ENCODE measurements at regions of chr5 and their contacts with region 1.

Region 1: GRCh38 chr5:60232036-60232795 is 338.7 kb upstream of the PDE4D start:
- DNase-seq: no peak
- H3K4me3 ChIP-seq: no peak overlapping the region
- H3K27ac ChIP-seq: no peak overlapping the region
- H3K4me1 ChIP-seq: no peaks in the 10 kb centered on the region
- H3K27me3 ChIP-seq: no peaks in the 10 kb centered on the region
- CTCF ChIP-seq: no peak
- POLR2A ChIP-seq: no peak

Region 2: DNA sequence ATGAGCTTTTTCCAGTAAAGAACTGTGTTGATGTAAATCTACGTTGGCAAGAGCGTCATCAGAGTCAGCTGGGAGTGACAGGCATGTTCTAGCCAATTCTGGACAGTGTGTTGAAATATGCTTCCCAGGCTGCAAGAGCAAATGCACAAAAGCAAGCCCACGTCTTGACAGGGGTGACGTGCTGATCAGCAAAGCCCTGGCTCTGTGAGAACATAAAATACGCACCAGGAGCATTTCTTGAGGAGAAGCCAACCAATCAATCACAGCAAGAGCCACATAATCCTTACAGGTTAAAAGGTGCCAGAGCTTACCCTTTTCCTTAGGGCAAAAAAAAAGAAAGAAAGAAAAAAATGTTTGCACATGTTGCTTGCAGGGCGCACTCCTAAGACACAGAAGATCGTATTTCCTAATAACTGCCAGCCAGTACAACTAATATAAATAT is 486.8 kb before region 1 on chr5:
- intact Hi-C with region 1: no loop called
- DNase-seq: no peak
- H3K4me3 ChIP-seq: no peak overlapping the region
- H3K27ac ChIP-seq: no peak overlapping the region
- H3K4me1 ChIP-seq: no peaks in the 10 kb centered on the region
- H3K27me3 ChIP-seq: no peaks in the 10 kb centered on the region
- CTCF ChIP-seq: no peak
- POLR2A ChIP-seq: no peak

Region 3: DNA sequence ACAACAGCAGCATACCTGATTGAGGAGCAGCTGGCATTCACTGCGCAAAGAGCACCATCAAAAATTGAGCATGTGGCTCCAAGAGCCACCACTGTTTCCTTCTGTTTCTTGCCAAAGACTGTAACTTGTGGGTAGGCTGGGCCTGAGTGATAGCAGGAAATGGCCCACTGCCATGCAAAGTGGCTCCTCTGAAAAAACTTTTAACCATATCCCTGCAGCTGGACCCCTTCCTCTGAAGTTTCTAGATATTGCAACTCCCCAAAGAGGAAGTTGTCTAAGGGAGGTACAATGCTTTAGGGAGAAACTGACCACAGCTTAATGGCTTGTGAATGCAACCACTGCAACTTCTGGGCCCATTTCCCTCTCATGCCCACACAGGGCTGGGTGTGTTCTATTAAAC is 16.7 kb after region 1 on chr5:
- intact Hi-C with region 1: no loop called
- DNase-seq: no peak
- H3K4me3 ChIP-seq: no peak overlapping the region
- H3K27ac ChIP-seq: no peak overlapping the region
- H3K4me1 ChIP-seq: no peaks in the 10 kb centered on the region
- H3K27me3 ChIP-seq: no peaks in the 10 kb centered on the region
- CTCF ChIP-seq: no peak
- POLR2A ChIP-seq: no peak

Region 4: DNA sequence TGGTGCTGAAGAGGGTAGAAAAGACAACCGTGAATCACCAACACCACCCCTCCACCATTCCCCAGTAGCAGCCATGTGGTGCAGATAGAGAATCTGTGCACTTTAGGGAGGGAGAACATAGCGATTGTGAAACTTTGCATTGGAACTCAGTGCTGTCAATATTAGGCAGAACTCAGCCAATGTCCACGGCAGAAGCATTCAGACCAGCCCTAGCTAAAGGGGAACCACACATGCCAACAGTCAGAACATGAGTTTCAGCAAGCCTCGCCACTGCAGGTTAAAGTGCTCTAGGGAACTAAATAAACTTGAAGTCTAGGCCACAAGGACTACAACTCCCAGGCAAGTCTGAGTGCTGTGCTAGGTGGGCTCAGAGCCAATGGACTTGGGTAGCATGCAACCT is 506.2 kb after region 1 on chr5:
- intact Hi-C with region 1: loop called (anchors 5 kb)
- DNase-seq: no peak
- H3K4me3 ChIP-seq: no peak overlapping the region
- H3K27ac ChIP-seq: no peak overlapping the region
- H3K4me1 ChIP-seq: no peaks in the 10 kb centered on the region
- H3K27me3 ChIP-seq: no peaks in the 10 kb centered on the region
- CTCF ChIP-seq: no peak
- POLR2A ChIP-seq: no peak